ENCODE measurements at regions of chr4 and their contacts with region 1.

Region 1: GRCh38 chr4:102881343-102881742 is 12.6 kb downstream of the CISD2 start:
- DNase-seq: no peak
- H3K4me3 ChIP-seq: no peak overlapping the region
- H3K27ac ChIP-seq: no peak overlapping the region
- H3K4me1 ChIP-seq: no peaks in the 10 kb centered on the region
- H3K27me3 ChIP-seq: no peaks in the 10 kb centered on the region
- CTCF ChIP-seq: no peak

Region 2: DNA sequence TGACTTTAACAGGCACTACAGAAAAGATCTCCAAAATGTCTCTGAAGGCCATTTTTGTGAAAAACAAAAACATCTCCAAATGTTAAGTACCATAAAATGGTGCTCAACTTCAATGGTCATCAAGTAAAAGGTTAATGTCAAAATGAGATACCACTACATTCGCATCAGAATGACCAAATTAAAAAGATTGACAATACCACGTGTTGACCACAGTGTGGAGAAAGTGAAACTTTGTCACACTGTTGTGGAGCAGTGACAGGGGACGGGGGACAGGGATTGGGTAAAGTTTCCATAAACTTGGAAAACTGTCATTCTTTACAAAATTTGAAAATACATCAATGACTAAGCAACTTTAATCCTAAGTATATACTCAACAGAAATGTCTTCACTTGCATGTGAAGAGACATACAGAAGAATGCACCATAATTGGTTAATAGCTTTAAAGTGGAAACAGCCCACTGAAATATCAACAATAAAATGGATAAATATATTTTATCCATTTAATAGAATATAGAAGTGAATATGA is 31.7 kb before region 1 on chr4:
- CTCF ChIA-PET with region 1: no interaction called
- dilution Hi-C with region 1: loop called (anchors 5 kb)
- in situ Hi-C with region 1: no loop called
- intact Hi-C with region 1: no loop called
- DNase-seq: no peak
- H3K4me3 ChIP-seq: no peak overlapping the region
- H3K27ac ChIP-seq: no peak overlapping the region
- H3K4me1 ChIP-seq: no peaks in the 10 kb centered on the region
- H3K27me3 ChIP-seq: no peaks in the 10 kb centered on the region
- CTCF ChIP-seq: no peak

Measured in mammary epithelial cell (primary cell).